PC-3 (cell line): ENCODE measurements at regions of chr2 and their contacts with region 1.

Region 1: DNA sequence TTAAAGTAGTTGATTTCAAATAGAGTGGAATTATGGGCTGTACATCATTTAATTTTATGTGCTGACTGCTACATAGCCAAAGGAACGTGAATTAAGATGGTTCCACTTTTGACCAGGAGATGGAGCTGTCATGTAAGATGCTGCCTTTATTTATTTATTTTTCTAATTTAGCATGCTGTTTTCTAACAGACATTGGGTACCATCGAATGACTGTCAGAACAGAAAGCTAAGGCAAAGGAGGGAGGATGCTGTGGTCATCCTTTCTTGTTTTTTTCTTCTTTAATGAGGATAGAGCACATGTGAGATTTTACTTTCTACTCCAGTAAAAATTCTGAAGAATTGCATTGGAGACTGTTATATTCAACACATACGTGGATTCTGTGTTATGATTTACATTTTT is at the start of gene SCN2A:
- DNase-seq: peak; percentile 67
- ATAC-seq: peak; percentile 37
- H3K4me3 ChIP-seq: no peak within 1 kb of the TSS
- H3K27ac ChIP-seq: no peak within 1 kb of the TSS
- H3K4me1 ChIP-seq: no peaks in the 10 kb centered on the region
- H3K27me3 ChIP-seq: no peaks in the 10 kb centered on the region
- CTCF ChIP-seq: peak; percentile 74
- total RNA-seq, gene SCN2A: 0.07 and 0.46 TPM in 2 replicates

Region 2: GRCh38 chr2:165087933-165088901 is 151.0 kb before region 1 on chr2:
- CTCF ChIA-PET with region 1: no interaction called
- POLR2A ChIA-PET with region 1: no interaction called
- intact Hi-C with region 1: no loop called
- DNase-seq: no peak
- ATAC-seq: no peak
- H3K4me3 ChIP-seq: no peak overlapping the region
- H3K27ac ChIP-seq: no peak overlapping the region
- H3K4me1 ChIP-seq: no peaks in the 10 kb centered on the region
- H3K27me3 ChIP-seq: no peaks in the 10 kb centered on the region
- CTCF ChIP-seq: no peak; the same call in 1 of the 2 replicates

Region 3: DNA sequence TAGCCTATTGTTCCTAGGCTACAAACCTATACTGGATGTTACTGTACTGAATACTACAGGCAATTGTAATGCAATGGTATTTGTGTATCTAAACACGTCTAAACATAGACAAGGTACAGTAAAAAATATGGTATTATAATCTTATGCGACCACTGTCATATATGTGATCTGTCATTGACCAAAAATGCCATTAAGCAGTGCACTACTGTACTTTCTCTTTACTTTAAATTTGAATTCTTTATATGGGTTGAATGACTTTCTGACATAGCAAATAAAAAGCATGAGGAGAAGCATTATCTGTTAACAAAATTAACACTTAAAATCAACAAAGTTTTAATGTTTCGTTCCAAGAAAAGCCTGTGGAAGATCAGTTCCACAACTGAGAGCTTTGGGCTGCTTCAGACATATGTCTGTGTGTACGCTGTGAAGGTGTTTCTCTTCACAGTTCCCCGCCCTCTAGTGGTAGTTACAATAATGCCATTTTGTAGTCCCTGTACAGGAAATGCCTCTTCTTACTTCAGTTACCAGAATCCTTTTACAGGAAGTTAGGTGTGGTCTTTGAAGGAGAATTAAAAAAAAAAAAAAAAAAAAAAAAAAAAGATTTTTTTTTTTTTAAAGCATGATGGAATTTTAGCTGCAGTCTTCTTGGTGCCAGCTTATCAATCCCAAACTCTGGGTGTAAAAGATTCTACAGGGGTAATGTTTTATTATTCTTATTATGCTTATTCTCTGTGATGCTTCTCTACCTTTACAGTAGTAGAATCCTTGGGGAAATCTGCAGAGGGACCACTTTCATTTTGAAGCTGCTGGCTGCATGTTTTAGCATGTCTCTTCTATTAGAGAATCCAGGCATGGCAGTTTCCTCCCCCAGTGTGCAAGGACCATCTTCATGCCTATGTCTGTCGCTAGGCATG is 54.5 kb after region 1 on chr2:
- CTCF ChIA-PET with region 1: no interaction called
- POLR2A ChIA-PET with region 1: no interaction called
- intact Hi-C with region 1: loop called (anchors 1 kb)
- DNase-seq: peak; percentile 90
- ATAC-seq: peak; percentile 100
- H3K4me3 ChIP-seq: peak overlapping the region; percentile 46; the same call in 1 of the 2 replicates
- H3K27ac ChIP-seq: no peak overlapping the region
- H3K4me1 ChIP-seq: no peaks in the 10 kb centered on the region; the same call in 1 of the 2 replicates
- H3K27me3 ChIP-seq: peaks cover 5% of the 10 kb centered on the region; the same call in 1 of the 2 replicates
- CTCF ChIP-seq: peak; percentile 70

Region 4: GRCh38 chr2:165645930-165646831 is 407.0 kb after region 1 on chr2:
- CTCF ChIA-PET with region 1: no interaction called
- POLR2A ChIA-PET with region 1: no interaction called
- intact Hi-C with region 1: no loop called
- DNase-seq: no peak
- ATAC-seq: no peak
- H3K4me3 ChIP-seq: no peak overlapping the region
- H3K27ac ChIP-seq: no peak overlapping the region
- H3K4me1 ChIP-seq: no peaks in the 10 kb centered on the region
- H3K27me3 ChIP-seq: no peaks in the 10 kb centered on the region
- CTCF ChIP-seq: no peak